ENCODE measurements at regions of chr11 and their contacts with region 1.

Region 1: DNA sequence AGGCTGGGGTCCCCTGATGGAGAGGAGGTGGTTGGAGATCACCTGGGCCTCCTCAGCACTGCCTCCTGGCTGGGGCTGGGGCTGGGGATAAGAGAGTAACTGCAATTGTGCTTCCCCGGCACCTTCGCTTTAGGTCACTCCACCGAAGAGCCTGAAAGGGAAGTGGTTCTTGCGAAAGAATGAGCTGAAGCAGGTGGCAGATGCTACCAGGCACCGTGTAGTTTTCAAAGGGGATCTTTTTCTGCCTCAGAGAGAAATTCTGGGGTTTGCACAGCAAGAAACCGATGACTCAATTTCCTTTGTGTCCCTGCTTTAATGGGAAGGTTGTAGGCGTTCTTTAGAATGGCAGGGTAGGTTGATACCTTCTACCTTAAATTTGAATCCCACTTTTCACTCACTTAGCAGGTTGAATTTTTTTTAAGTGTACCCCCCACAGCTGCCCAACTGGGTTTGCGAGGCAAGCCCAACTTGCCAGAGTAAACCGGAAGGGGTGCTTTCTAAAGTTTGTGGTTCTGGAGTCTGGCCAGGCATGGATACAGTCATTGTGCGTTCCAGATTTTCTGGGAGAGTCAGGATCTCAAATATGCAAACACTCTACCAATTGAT is 5.3 kb downstream of the CD44 start:
- DNase-seq: peak; percentile 87
- H3K4me3 ChIP-seq: peak overlapping the region; percentile 36 to 98 (median 88)
- H3K27ac ChIP-seq: peak overlapping the region; percentile 95
- H3K4me1 ChIP-seq: peaks cover 52% of the 10 kb centered on the region
- H3K27me3 ChIP-seq: no peaks in the 10 kb centered on the region
- CTCF ChIP-seq: peak in 1 of 2 donors; percentile 9

Region 2: DNA sequence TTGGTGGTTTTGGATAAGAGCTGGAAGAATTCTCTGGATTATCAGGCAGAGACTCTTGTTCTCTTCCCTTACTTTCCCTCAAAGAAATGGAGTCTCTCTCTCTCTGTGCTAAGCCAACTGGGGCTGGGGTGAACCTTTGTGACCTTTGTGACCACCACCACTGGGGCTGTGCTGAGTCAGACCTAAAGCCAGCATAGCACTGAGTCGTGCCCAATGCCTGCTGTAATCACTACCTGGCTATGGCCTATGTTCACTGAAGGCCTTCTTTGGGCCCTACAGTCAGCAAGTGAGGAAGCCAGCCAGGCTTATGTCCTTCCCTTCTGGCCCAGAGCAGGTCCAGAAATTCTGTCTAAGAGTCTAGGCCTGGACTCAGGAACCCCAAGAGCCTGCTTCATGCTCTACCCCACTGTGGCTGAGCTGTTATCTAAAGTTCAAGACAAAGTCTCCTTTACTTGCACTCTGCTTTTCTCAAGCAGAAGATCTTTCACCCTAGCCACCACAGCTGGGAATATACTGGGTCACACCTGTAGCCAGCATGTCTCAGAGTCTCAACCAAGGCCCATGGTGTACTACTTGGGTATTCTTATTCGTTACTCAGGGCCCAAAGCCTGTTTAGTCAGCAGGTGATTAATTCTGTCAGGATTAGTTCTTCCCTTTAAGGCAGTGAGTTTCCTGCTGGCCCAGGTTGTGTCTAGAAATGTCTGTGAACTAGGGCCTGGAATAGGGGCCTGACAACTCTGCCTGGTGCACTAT is 437.4 kb before region 1 on chr11:
- CTCF ChIA-PET with region 1: no interaction called
- dilution Hi-C with region 1: no loop called
- in situ Hi-C with region 1: no loop called
- intact Hi-C with region 1: no loop called
- DNase-seq: peak; percentile 66
- H3K4me3 ChIP-seq: no peak overlapping the region
- H3K27ac ChIP-seq: no peak overlapping the region
- H3K4me1 ChIP-seq: no peaks in the 10 kb centered on the region
- H3K27me3 ChIP-seq: no peaks in the 10 kb centered on the region
- CTCF ChIP-seq: no peak

Region 3: DNA sequence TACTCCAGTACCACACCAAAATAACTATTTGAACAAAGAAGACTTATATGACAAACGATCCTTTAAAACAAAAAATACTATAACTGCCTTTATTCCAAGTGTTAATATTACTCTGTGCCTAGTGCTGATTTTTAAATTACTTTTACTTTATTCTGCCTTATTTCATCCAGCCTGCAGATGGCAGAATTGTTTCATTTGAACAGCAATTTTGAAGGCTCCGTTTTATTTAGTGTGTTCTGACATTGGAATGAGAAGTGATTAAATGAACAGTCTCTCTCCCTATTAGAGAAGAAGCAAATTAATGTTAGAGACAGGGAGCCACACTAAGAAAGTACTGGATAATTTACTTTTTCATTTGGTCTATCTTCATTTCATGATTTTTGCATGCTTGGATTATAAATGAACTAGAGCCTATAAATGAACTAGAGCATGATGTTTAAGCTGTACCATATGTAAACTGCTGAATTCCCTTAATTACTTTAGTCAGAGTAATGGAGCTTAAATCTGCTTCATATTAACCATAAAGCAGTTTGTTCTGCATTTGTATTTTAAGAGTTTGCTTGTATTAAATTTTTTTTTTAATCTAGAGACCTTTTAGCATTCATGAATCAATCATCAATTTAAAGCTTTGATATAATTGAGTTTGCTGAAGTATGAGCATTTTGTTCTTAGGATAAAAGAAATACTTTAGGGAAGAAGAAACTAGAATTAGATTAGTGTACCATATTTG is 218.0 kb before region 1 on chr11:
- CTCF ChIA-PET with region 1: no interaction called
- dilution Hi-C with region 1: loop called (anchors 5 kb)
- in situ Hi-C with region 1: no loop called
- intact Hi-C with region 1: loop called (anchors 2 kb)
- DNase-seq: peak; percentile 36
- H3K4me3 ChIP-seq: no peak overlapping the region
- H3K27ac ChIP-seq: no peak overlapping the region
- H3K4me1 ChIP-seq: peaks cover 4% of the 10 kb centered on the region
- H3K27me3 ChIP-seq: no peaks in the 10 kb centered on the region
- CTCF ChIP-seq: peak; percentile 63 to 66

Region 4: GRCh38 chr11:35006389-35007128 is 137.7 kb before region 1 on chr11:
- CTCF ChIA-PET with region 1: no interaction called
- dilution Hi-C with region 1: loop called (anchors 5 kb)
- in situ Hi-C with region 1: no loop called
- intact Hi-C with region 1: loop called (anchors 1 kb)
- DNase-seq: no peak
- H3K4me3 ChIP-seq: no peak overlapping the region
- H3K27ac ChIP-seq: no peak overlapping the region
- H3K4me1 ChIP-seq: peaks cover 25% of the 10 kb centered on the region
- H3K27me3 ChIP-seq: no peaks in the 10 kb centered on the region
- CTCF ChIP-seq: no peak

Region 5: GRCh38 chr11:35040221-35040942 is 103.9 kb before region 1 on chr11:
- CTCF ChIA-PET with region 1: no interaction called
- dilution Hi-C with region 1: no loop called
- in situ Hi-C with region 1: loop called in 1 of 2 experiments (anchors 5 kb)
- intact Hi-C with region 1: loop called (anchors 1 kb)
- DNase-seq: peak; percentile 99
- H3K4me3 ChIP-seq: peak overlapping the region; percentile 4 to 40 (median 32)
- H3K27ac ChIP-seq: peak overlapping the region; percentile 97
- H3K4me1 ChIP-seq: peaks cover 64% of the 10 kb centered on the region
- H3K27me3 ChIP-seq: no peaks in the 10 kb centered on the region
- CTCF ChIP-seq: no peak

Region 6: DNA sequence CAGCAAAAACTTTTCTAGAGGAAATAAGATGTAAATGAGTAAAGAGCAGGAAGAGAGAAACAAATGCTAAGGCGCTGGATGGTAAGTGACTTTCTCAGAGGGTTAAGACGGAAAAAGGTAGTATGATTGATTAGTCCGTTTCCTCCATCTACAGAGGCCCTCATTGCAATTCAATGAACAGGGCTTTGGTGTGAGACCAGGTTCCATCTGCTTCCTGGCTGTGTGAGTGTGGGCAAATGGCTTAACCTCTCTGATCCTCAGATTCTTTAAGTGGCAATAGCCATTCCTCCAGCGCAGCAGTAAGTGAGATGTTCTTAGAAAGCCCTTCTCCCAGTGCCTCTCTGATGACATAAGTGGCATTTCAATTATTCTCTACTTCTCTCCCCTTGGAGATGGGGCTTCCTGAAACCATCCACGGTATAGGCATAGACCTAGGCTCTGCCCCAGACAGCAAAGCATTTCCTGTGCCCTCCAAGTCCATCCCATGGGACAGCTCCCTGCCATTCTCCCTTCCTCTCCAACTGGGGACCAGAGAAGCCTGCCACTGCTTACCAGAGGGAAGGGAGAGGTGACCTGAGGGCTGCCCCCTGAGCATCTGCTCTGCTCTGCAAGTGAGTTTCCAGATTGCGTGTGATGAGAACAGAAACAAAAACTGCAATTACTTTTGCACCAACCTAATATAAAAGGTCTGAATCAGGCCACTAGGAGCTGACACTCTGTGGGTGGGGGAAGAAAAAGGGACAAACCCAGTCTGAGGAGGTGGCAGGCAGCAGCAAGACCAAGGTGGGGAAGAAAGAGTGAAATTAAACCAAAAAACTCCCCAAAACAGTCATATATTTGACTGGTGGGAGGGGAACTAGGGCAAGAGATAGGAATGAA is 18.0 kb before region 1 on chr11:
- CTCF ChIA-PET with region 1: no interaction called
- dilution Hi-C with region 1: no loop called
- in situ Hi-C with region 1: no loop called
- intact Hi-C with region 1: no loop called
- DNase-seq: no peak
- H3K4me3 ChIP-seq: no peak overlapping the region
- H3K27ac ChIP-seq: no peak overlapping the region
- H3K4me1 ChIP-seq: no peaks in the 10 kb centered on the region
- H3K27me3 ChIP-seq: no peaks in the 10 kb centered on the region
- CTCF ChIP-seq: no peak

Region 7: GRCh38 chr11:35165423-35166368 is 21.5 kb after region 1 on chr11:
- CTCF ChIA-PET with region 1: interaction called, 6 read pairs
- dilution Hi-C with region 1: no loop called
- in situ Hi-C with region 1: no loop called
- intact Hi-C with region 1: loop called (anchors 1 kb)
- DNase-seq: peak; percentile 71
- H3K4me3 ChIP-seq: peak overlapping the region in 1 of 3 experiments; percentile 5
- H3K27ac ChIP-seq: peak overlapping the region; percentile 96
- H3K4me1 ChIP-seq: peaks cover 88% of the 10 kb centered on the region
- H3K27me3 ChIP-seq: no peaks in the 10 kb centered on the region
- CTCF ChIP-seq: no peak